ENCODE measurements at regions of chr4 and their contacts with region 1.

Region 1: GRCh38 chr4:112938461-112939058 is 110.9 kb upstream of the ANK2 start:
- DNase-seq: no peak
- H3K4me3 Mint-ChIP-seq: no peak overlapping the region
- H3K27ac Mint-ChIP-seq: no peak overlapping the region
- H3K4me1 Mint-ChIP-seq: no peaks in the 10 kb centered on the region
- H3K27me3 Mint-ChIP-seq: peaks cover 17% of the 10 kb centered on the region

Region 2: DNA sequence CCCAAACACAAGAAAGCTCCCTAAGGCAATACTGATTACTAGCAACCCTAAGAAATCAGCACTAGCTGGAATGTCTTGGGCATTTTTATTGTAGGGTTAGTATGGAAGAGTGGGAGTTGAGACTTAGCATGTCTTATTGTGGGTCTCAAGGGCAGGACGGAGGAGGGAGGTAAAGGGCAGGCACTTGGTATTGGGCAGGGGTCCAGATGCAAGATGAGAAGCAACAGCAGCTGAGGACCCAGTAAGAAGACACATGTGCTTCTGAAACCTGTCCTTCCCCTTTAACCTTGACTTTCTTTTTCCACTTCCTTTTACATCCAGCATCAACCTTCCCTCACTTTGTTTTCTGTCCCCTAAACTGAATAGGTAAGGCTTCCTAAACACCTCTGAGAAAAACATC is 264.2 kb before region 1 on chr4:
- CTCF ChIA-PET with region 1: no interaction called
- intact Hi-C with region 1: no loop called
- DNase-seq: no peak
- H3K4me3 Mint-ChIP-seq: no peak overlapping the region
- H3K27ac Mint-ChIP-seq: no peak overlapping the region
- H3K4me1 Mint-ChIP-seq: no peaks in the 10 kb centered on the region
- H3K27me3 Mint-ChIP-seq: no peaks in the 10 kb centered on the region

Region 3: DNA sequence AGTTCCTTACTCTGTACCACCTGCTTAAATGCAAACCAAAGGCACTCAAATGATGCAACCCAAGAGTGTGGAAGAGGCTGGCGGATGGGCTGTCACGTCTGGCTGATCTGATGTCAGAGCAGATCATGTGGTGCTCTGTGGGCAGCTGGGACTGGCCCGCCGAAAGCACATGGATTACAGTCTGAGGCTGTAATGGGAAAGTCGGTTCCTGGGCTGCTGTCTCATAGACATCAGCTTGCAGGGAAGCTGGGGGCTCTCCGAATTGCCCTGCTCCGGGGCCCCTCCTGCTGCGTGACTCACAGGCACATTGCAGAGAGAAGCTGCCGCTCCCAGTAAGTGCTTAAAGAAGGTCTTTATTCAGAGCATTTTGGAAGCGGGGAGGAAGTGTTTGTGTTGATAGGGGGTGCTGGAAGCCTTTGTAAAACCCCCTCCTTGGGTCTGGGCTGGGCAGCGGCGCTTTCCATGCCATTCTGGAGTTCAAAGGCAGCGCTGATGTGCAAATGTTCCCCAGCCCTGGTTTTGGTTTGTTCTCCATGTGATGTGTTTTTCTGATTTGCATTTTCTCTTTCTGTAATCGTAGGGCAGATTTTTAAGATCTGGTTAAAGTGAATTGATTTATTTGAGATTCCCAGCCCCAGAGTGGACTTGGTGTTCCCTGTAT is 120.5 kb before region 1 on chr4:
- CTCF ChIA-PET with region 1: interaction called, 6 read pairs
- intact Hi-C with region 1: loop called (anchors 1 kb)
- DNase-seq: peak; percentile 88
- H3K4me3 Mint-ChIP-seq: peak overlapping the region; percentile 79
- H3K27ac Mint-ChIP-seq: peak overlapping the region; percentile 62
- H3K4me1 Mint-ChIP-seq: peaks cover 15% of the 10 kb centered on the region
- H3K27me3 Mint-ChIP-seq: peaks cover 36% of the 10 kb centered on the region

Region 4: GRCh38 chr4:113069212-113069892 is 130.8 kb after region 1 on chr4:
- CTCF ChIA-PET with region 1: no interaction called
- intact Hi-C with region 1: no loop called
- DNase-seq: no peak
- H3K4me3 Mint-ChIP-seq: no peak overlapping the region
- H3K27ac Mint-ChIP-seq: no peak overlapping the region
- H3K4me1 Mint-ChIP-seq: no peaks in the 10 kb centered on the region
- H3K27me3 Mint-ChIP-seq: peaks cover 2% of the 10 kb centered on the region